ENCODE measurements at regions of chr14 and their contacts with region 1.

Region 1: GRCh38 chr14:102768223-102769048 is 8.8 kb upstream of the TRAF3 start:
- DNase-seq: peak; percentile 47
- H3K4me3 ChIP-seq: no peak overlapping the region
- H3K27ac ChIP-seq: no peak overlapping the region
- H3K4me1 ChIP-seq: peaks cover 11% of the 10 kb centered on the region
- CTCF ChIP-seq: no peak

Region 2: DNA sequence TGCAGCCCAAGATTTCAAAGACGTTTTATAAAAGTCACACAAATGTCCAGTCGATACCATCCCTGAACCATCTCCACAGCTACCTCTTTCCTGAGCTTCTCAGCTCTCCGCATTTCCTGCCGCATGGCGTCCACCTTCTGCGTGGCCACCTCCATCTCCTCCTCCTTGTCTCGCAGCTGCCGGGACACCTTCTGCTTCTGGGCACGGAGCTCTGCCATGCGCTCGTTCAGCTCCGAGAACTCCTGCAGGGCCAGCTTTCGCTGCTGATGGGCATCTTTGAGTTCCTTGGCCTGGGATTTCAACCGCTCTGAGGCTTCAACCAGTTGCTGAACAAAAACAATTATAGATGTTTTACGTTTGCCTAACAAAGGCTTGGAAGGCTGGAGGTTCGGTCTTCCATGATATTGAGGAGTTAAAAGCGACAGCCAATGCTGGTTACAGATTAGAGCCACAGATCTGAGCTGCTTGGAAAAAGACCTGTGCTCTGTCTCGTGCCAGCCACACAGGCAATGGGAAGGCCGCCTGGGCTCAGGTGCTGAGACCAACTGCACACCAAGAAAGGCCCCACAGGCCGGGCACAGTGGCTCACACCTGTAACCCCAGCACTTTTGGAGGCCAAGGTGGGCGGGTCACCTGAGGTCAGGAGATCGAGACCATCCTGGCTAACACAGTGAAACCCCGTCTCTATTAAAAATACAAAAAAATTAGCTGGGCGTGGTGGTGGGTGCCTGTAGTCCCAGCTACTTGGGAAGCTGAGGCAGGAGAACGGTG is 203.6 kb after region 1 on chr14:
- CTCF ChIA-PET with region 1: no interaction called
- POLR2A ChIA-PET with region 1: interaction called, 11 read pairs
- intact Hi-C with region 1: no loop called
- DNase-seq: no peak
- H3K4me3 ChIP-seq: no peak overlapping the region
- H3K27ac ChIP-seq: no peak overlapping the region
- H3K4me1 ChIP-seq: no peaks in the 10 kb centered on the region
- CTCF ChIP-seq: no peak

Measured in OCI-LY7 (cell line).